Panc1 (cell line): ENCODE measurements at regions of chr2 and their contacts with region 1.

Region 1: GRCh38 chr2:177348733-177349693 is 43.6 kb upstream of the AGPS start:
- DNase-seq: no peak
- ATAC-seq: no peak
- H3K4me3 ChIP-seq: no peak overlapping the region
- H3K27ac ChIP-seq: no peak overlapping the region
- H3K4me1 ChIP-seq: no peaks in the 10 kb centered on the region; the same call in 1 of the 2 replicates
- H3K27me3 ChIP-seq: no peaks in the 10 kb centered on the region
- CTCF ChIP-seq: no peak

Region 2: GRCh38 chr2:177325270-177325929 is 23.6 kb before region 1 on chr2:
- CTCF ChIA-PET with region 1: no interaction called
- POLR2A ChIA-PET with region 1: no interaction called
- in situ Hi-C with region 1: no loop called
- intact Hi-C with region 1: no loop called
- DNase-seq: no peak
- ATAC-seq: no peak
- H3K4me3 ChIP-seq: no peak overlapping the region
- H3K27ac ChIP-seq: no peak overlapping the region
- H3K4me1 ChIP-seq: 0 out of 2 replicates have a peak, but pooled peaks cover 3% of the 10 kb centered on the region
- H3K27me3 ChIP-seq: no peaks in the 10 kb centered on the region
- CTCF ChIP-seq: no peak

Region 3: GRCh38 chr2:177359836-177360595 is 11.0 kb after region 1 on chr2:
- CTCF ChIA-PET with region 1: no interaction called
- POLR2A ChIA-PET with region 1: no interaction called
- in situ Hi-C with region 1: no loop called
- intact Hi-C with region 1: no loop called
- DNase-seq: no peak
- ATAC-seq: no peak
- H3K4me3 ChIP-seq: no peak overlapping the region
- H3K27ac ChIP-seq: no peak overlapping the region
- H3K4me1 ChIP-seq: no peaks in the 10 kb centered on the region
- H3K27me3 ChIP-seq: no peaks in the 10 kb centered on the region
- CTCF ChIP-seq: no peak

Region 4: GRCh38 chr2:177604271-177605065 is 255.5 kb after region 1 on chr2:
- CTCF ChIA-PET with region 1: no interaction called
- POLR2A ChIA-PET with region 1: no interaction called
- in situ Hi-C with region 1: no loop called
- intact Hi-C with region 1: loop called (anchors 10 kb)
- DNase-seq: peak; percentile 25
- ATAC-seq: peak; percentile 21
- H3K4me3 ChIP-seq: no peak overlapping the region
- H3K27ac ChIP-seq: no peak overlapping the region
- H3K4me1 ChIP-seq: peaks cover 2% of the 10 kb centered on the region
- H3K27me3 ChIP-seq: no peaks in the 10 kb centered on the region
- CTCF ChIP-seq: peak; percentile 79